Left colon (tissue), 2 donors: ENCODE measurements at regions of chr1 and their contacts with region 1.

Region 1: DNA sequence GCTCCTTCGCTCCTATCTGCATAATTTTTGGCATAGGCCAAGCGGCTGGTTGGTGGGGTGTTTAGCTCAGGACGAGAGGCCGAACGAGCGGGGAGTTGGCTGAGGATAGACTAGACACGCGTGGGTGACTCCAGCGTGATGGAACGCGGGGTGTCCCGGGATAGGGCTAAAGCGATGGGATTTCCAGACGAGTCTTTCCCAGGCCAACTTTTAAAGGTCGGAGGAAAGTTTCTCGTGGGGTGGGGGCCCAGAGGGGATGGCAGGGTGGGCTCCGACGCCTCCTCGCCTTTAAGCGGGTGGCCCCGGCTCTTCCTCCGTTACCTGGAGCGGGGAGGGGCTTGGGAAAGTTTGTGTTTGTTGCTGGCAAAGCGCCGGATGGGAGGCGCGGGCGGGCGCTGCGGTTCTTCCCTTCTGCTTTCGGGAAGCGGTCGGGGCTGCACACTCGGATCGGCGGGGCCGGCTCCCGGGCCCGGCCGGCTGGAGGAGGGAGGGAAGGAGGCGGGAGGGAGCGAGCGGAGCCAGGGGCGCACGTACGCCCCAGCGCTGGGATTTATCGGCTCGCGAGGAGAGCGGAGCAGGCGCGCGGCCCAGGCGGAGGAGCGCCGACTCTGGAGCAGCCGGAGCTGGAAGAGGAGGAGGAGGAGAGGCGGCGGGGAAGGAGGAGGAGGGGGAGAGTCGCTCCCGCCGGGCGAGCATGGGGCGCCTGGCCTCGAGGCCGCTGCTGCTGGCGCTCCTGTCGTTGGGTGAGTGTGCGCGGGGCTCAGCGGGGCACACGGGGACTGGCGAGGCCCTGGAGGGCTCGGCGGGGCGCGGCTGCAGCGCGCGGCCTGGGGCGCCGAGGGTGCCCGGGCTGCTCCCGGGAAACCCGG is at the start of gene PTGFRN:
- DNase-seq: peak; percentile 74 to 81
- ATAC-seq: peak; percentile 70
- total RNA-seq, gene PTGFRN: 97.2 to 98.6 TPM

Region 2: GRCh38 chr1:116951200-116951935 is 41.6 kb after region 1 on chr1:
- intact Hi-C with region 1: no loop called
- DNase-seq: peak; percentile 39 to 51
- ATAC-seq: peak; percentile 37

Region 3: GRCh38 chr1:116987256-116987555 is 77.5 kb after region 1 on chr1:
- intact Hi-C with region 1: loop called in 1 of 2 experiments (anchors 10 kb)
- DNase-seq: peak; percentile 18 to 67
- ATAC-seq: no peak